ENCODE measurements at regions of chr9 and their contacts with region 1.

Region 1: DNA sequence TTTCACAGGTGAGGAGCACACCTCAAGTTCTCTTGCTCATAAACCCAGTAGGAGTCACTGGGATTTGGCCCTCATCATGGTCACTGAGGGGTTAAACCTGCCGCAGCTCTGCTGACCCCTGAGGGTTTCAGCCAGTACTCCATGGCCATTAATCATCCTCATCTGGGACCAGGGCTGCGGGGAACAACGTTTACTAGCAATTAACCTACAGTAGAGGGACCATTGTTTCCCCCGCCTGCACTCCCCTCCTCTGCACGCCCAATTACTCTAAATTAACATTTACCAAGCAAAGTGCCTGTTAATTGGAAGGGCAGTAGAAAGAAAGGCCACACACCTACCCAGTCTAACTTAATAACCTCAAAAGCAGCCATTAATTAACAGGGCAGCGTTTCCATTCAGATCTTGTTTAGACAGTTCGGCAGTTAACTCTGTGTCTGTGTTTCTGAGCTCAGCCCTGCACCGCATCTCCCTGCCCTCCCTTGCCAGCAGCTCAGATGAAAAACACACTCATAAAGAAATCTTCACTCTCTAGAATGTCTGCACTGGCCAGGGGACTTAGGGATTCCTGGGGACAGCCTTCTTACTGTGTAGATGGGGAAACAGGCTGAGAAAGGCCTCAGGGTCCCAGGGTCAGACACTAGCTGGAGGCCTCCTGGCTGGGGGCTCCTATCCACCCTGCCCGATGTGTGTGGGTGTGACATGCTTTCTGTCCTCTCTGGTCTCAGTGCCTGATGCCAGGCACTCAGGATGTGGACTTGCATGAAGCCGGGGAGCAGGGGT is 51.6 kb downstream of the ALG2 start:
- DNase-seq: no peak
- H3K4me3 ChIP-seq: no peak overlapping the region
- H3K27ac ChIP-seq: no peak overlapping the region
- H3K4me1 ChIP-seq: no peaks in the 10 kb centered on the region
- H3K27me3 ChIP-seq: no peaks in the 10 kb centered on the region
- CTCF ChIP-seq: no peak
- POLR2A ChIP-seq: no peak

Region 2: GRCh38 chr9:99211741-99212140 is 41.6 kb after region 1 on chr9:
- intact Hi-C with region 1: no loop called
- DNase-seq: no peak
- H3K4me3 ChIP-seq: no peak overlapping the region
- H3K27ac ChIP-seq: no peak overlapping the region
- H3K4me1 ChIP-seq: no peaks in the 10 kb centered on the region
- H3K27me3 ChIP-seq: no peaks in the 10 kb centered on the region
- CTCF ChIP-seq: no peak
- POLR2A ChIP-seq: no peak

Region 3: GRCh38 chr9:99785010-99785590 is 614.9 kb after region 1 on chr9:
- intact Hi-C with region 1: no loop called
- DNase-seq: no peak
- H3K4me3 ChIP-seq: no peak overlapping the region
- H3K27ac ChIP-seq: no peak overlapping the region
- H3K4me1 ChIP-seq: no peaks in the 10 kb centered on the region
- H3K27me3 ChIP-seq: no peaks in the 10 kb centered on the region
- CTCF ChIP-seq: no peak
- POLR2A ChIP-seq: no peak

Region 4: GRCh38 chr9:100459963-100460362 is 1289.8 kb after region 1 on chr9:
- intact Hi-C with region 1: loop called (anchors 5 kb)
- DNase-seq: no peak
- H3K4me3 ChIP-seq: no peak overlapping the region
- H3K27ac ChIP-seq: no peak overlapping the region
- H3K4me1 ChIP-seq: no peaks in the 10 kb centered on the region
- H3K27me3 ChIP-seq: no peaks in the 10 kb centered on the region
- CTCF ChIP-seq: no peak
- POLR2A ChIP-seq: no peak

Measured in breast epithelium (tissue), 4 donors.